ENCODE measurements at regions of chr3 and their contacts with region 1.

Region 1: DNA sequence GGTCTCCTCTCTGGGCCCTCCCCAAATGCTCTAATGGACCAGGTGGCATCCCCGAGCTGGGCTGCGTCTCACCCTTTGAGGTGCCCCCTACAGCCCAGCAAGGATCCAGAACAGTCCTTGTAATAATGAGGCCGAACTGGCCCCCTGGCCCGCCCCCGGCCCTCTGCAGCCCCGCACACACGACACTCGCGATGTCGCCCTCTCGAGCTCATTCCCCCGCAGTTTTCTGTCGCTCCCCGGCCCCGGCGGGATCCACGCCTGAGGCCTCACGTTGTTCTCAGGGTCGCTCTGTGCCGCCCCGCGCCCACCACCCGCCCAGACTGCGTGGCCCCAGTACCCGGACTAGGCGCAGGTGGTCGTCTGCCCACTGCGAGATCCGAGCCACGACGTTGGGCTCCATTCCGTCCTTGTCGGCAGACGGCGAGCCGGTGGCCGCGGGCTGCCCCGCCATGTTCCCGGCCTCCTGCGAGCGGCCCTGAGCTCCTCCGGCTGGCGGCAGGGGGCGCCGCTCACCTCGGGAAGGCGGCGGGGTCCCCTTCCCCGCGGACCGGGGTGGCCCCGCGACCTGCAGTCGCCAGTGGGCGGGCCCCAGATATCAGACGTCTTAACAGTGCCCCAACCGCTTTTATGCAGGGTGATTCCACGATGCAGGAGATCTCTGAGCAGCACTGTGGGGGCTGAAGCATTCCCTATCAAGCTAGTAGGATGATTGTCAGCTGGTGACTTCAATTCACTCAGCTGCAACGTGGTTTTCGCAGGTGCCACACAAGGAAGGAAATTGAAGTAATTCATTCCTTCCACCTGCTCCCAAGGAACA is at the start of gene C3orf33:
- DNase-seq: peak; percentile 88
- ATAC-seq: peak; percentile 97
- total RNA-seq, gene C3orf33: 6.6 TPM

Region 2: GRCh38 chr3:155854141-155854940 is 48.3 kb after region 1 on chr3 and contains the start of gene SLC33A1:
- intact Hi-C with region 1: loop called (anchors 1 kb)
- DNase-seq: peak; percentile 99
- ATAC-seq: peak; percentile 99
- total RNA-seq, gene SLC33A1: 20.4 TPM

Measured in Right ventricle myocardium inferior (tissue), 1 donor.